ENCODE measurements at regions of chr17 and their contacts with region 1.

Region 1: GRCh38 chr17:49616601-49617131 is 41.0 kb downstream of the NXPH3 start:
- DNase-seq: peak; percentile 84
- ATAC-seq: peak; percentile 93

Region 2: DNA sequence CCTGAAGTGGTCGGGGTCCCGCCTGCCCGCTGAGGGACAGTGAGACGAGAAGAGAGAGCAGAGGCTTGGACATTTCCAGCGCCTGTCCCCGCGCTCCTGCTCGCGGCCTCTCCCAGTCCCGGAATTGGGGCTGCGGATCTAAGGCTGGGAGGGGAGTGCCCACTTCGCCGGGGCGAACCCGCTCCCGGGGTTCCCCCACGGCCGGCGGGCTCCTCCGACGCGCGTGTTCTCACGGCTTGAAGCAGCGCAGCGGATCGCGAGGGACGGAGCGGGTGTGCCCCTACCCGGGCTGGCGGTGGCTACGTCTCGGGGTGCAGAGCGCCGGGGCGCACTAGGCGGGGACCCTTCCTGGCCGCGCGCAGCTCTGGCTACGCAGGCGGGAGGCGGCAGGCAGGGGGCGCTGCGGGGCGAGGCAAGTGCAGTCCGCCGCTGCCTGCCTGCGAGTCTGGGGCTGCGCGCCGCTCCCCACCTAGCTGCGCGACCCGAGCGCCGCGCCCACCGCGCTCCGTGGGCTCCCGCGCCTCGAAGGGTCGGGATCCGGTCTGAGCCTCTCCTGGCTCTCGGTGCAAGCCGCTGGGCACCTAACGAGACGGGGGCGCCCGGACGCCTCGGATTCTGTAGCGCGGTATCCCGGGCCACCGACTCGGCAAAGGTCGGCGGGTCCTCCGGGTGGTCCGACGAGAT is 120.3 kb before region 1 on chr17:
- intact Hi-C with region 1: no loop called
- DNase-seq: peak; percentile 89
- ATAC-seq: peak; percentile 94

Region 3: DNA sequence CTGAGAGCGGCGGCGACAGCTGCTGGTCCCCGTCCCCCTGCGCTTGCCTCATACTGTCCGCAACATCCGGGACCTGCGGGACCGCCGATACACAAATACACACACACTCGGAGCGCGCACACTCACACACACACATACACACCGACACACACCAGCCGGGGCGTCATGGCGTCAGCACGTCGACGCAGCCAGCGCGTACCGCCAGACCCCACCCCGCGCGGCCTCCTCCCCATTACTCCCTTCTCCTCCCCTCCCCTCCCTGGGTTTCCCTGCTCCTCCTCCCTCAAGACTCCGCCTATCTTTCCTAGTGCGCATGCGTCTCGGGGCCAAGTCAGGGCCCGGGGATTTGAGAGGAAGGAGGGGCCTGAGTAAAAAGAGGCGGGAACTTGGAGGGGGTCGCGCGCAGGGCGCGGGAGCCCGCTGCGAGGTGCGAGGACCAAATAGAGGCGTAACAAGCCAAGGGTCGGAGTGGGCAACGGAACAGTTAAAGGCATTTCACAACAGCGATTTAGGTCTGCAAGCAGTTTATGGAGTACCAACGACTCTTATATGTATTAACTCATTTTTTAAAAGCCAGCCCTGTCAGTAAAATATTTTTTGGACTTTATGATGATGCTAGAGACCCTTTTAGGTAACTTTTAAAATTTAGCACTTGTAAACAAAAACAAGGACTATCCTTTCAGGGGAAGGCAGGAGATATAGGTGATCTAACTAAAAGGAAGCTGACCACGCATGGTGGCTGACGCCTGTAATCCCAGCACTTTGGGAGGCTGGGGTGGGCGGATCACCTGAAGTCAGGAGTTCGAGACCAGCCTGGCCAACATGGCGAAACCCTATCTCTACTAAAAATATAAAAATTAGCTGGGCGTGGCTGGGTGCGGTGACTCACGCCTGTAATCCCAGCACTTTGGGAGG is 61.5 kb after region 1 on chr17 and contains the start of gene SPOP:
- intact Hi-C with region 1: loop called (anchors 10 kb)
- DNase-seq: peak; percentile 100
- ATAC-seq: peak; percentile 97
- total RNA-seq, gene SPOP: 64.0 TPM

Measured in Right ventricle myocardium superior (tissue), 1 donor.